ENCODE measurements at regions of chr10 and their contacts with region 1.

Region 1: GRCh38 chr10:100766693-100767421 is 21.5 kb downstream of the PAX2 start:
- DNase-seq: no peak
- H3K4me3 ChIP-seq: no peak overlapping the region
- H3K27ac ChIP-seq: no peak overlapping the region
- H3K4me1 ChIP-seq: no peaks in the 10 kb centered on the region
- H3K27me3 ChIP-seq: peaks cover 0 to 7% (median 4%) of the 10 kb centered on the region in 4 experiments; a peak in 4 of 7 replicates
- CTCF ChIP-seq: peak; percentile 29 to 68 (median 48); a peak in 2 of 4 replicates
- EP300 ChIP-seq: no peak
- POLR2A ChIP-seq: no peak
- RAD21 ChIP-seq: peak; percentile 35 to 44; a peak in 3 of 4 replicates

Region 2: GRCh38 chr10:100755821-100756220 is 11.0 kb before region 1 on chr10:
- CTCF ChIA-PET with region 1: interaction called, 19 read pairs
- POLR2A ChIA-PET with region 1: no interaction called
- DNase-seq: no peak
- H3K4me3 ChIP-seq: no peak overlapping the region
- H3K27ac ChIP-seq: no peak overlapping the region
- H3K4me1 ChIP-seq: peaks cover 0 to 2% (median 0%) of the 10 kb centered on the region in 4 experiments; a peak in 1 of 7 replicates
- H3K27me3 ChIP-seq: peaks cover 35 to 73% (median 61%) of the 10 kb centered on the region in 4 experiments
- CTCF ChIP-seq: no peak
- EP300 ChIP-seq: no peak
- POLR2A ChIP-seq: no peak
- RAD21 ChIP-seq: no peak

Measured in H1 (cell line).